ENCODE measurements at regions of chr17 and their contacts with region 1.

Region 1: DNA sequence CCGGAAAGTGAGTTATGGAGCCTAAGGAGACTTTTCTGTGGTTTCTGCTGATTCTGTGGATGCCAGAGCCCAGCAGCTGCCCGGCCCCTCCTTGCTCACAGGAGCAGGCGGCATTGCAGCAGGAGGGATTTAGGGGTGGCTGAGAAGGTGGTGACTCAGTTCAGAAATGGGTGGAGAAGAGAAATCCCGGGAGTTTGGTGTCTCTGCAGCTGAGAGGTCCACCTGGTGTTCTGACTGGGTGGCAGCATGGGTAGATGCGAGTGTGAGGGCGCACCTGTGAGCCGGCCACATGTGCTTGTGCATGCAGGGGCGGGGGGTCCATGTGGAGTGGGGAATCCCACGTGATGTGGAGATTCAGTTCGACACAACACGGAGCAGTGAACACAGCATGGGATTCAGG is 16.1 kb upstream of the SPPL2C start:
- DNase-seq: peak; percentile 22
- ATAC-seq: no peak; the same call in 1 of the 2 replicates
- H3K4me3 ChIP-seq: no peak overlapping the region
- H3K27ac ChIP-seq: no peak overlapping the region
- H3K4me1 ChIP-seq: 0 out of 2 replicates have a peak, but pooled peaks cover 4% of the 10 kb centered on the region
- H3K27me3 ChIP-seq: 0 out of 2 replicates have a peak, but pooled peaks cover 6% of the 10 kb centered on the region
- CTCF ChIP-seq: no peak; the same call in 1 of the 2 replicates

Region 2: DNA sequence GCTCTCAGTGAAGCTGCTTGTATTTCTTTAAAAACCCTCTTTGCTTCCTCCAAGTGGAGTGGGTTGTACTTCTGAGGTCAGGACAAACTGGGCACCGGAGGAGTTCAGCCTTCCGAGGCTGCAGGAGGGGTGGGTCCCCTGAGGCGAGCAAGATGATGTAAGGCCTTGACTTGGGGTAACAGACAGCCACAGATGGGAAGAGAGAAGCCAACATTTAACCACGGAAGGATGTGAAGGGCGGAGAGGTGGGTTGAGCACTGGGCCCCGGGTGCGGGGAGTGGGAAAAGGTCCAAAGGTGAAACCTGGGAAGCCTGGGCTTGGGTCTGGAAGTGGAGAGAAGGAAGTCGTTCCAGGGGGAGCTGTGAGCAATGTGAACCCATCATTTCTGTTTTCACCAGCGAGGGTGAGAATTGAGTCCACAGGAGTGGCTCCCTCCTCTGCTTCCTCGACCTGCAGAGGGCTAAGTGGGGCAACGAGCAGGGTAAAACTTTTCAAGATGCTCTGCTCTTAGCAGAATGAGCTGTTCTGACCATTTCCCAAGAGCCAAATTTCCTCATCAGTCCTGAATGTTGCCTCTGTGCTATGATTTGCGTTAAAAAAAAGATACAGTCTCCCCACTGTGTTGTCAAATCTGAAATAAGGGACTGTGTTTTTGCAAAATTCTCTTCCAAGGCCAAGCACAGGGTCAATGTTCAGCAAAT is 182.2 kb before region 1 on chr17:
- CTCF ChIA-PET with region 1: no interaction called
- POLR2A ChIA-PET with region 1: no interaction called
- intact Hi-C with region 1: no loop called
- DNase-seq: no peak
- ATAC-seq: no peak
- H3K4me3 ChIP-seq: no peak overlapping the region
- H3K27ac ChIP-seq: no peak overlapping the region
- H3K4me1 ChIP-seq: peaks cover 4% of the 10 kb centered on the region; the same call in 1 of the 2 replicates
- H3K27me3 ChIP-seq: peaks cover 7% of the 10 kb centered on the region
- CTCF ChIP-seq: no peak

Region 3: GRCh38 chr17:45719335-45720071 is 109.1 kb before region 1 on chr17:
- CTCF ChIA-PET with region 1: interaction called, 12 read pairs
- POLR2A ChIA-PET with region 1: no interaction called
- intact Hi-C with region 1: loop called (anchors 1 kb)
- DNase-seq: peak; percentile 97
- ATAC-seq: peak; percentile 91
- H3K4me3 ChIP-seq: peak overlapping the region; percentile 37; the same call in 1 of the 2 replicates
- H3K27ac ChIP-seq: peak overlapping the region; percentile 20; the same call in 1 of the 2 replicates
- H3K4me1 ChIP-seq: peaks cover 26% of the 10 kb centered on the region
- H3K27me3 ChIP-seq: peaks cover 13% of the 10 kb centered on the region
- CTCF ChIP-seq: peak; percentile 82

Region 4: DNA sequence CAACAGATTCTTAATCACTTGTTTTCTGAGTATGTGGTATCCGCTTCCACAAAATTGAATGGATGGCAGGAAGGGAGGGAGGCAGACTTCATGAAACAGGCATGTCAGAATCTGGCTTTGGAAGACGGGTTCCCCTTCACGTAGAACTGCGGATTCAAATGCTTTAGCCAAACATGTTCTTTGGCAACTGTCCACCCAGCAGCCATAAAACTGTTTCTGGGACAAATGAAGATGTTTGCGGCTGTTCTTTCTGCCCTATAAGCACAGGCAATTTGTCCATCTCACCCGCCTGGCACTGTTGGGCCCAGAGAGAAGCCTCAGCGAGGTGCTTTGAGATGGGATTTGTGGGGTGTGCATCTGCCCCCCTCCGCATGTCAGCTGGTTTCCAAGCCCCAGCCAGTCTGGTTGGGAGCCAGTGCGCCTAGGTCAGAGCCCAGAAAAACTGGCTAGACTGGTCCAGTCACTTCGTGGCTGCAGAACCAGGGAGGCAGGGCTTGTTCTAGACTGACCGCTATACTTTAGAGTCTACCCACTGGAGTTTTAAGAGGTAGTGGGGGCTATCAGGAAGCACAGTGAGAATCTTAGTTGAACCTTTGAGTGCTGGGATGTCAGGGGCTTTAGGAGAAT is 38.2 kb before region 1 on chr17:
- CTCF ChIA-PET with region 1: no interaction called
- POLR2A ChIA-PET with region 1: no interaction called
- intact Hi-C with region 1: no loop called
- DNase-seq: peak; percentile 27
- ATAC-seq: no peak
- H3K4me3 ChIP-seq: no peak overlapping the region
- H3K27ac ChIP-seq: no peak overlapping the region
- H3K4me1 ChIP-seq: peaks cover 7% of the 10 kb centered on the region; the same call in 1 of the 2 replicates
- H3K27me3 ChIP-seq: peaks cover 54% of the 10 kb centered on the region
- CTCF ChIP-seq: no peak

Region 5: GRCh38 chr17:45984368-45984767 is 155.7 kb after region 1 on chr17:
- CTCF ChIA-PET with region 1: no interaction called
- POLR2A ChIA-PET with region 1: no interaction called
- intact Hi-C with region 1: no loop called
- DNase-seq: no peak
- ATAC-seq: no peak
- H3K4me3 ChIP-seq: no peak overlapping the region
- H3K27ac ChIP-seq: no peak overlapping the region
- H3K4me1 ChIP-seq: no peaks in the 10 kb centered on the region
- H3K27me3 ChIP-seq: no peaks in the 10 kb centered on the region
- CTCF ChIP-seq: no peak